ENCODE measurements at regions of chr16 and their contacts with region 1.

Region 1: DNA sequence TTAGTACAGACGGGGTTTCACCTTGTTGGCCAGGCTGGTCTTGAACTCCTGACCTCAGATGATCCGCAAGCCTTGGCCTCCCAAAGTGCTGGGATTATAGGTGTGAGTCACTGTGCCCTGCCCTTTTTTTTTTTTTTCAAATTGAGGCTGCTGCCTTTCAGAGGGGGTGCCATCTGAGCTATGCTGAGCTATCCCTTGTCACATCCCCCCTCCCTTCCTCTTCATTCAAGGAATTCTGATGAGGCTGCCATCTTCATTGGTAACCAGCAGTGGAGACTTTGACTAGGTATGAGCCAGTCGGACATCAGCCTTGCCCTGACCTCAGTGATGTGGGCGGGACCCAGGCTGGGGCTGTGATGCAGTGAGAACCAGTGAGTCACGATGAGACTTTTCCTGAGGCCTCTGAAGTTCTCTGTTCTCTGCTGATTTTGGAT is 24.4 kb upstream of the GPT2 start:
- DNase-seq: no peak
- ATAC-seq: peak; percentile 12; the same call in 1 of the 3 replicates
- H3K4me3 ChIP-seq: no peak overlapping the region
- H3K27ac ChIP-seq: no peak overlapping the region
- H3K4me1 ChIP-seq: peaks cover 13% of the 10 kb centered on the region
- H3K27me3 ChIP-seq: no peaks in the 10 kb centered on the region
- CTCF ChIP-seq: no peak
- EP300 ChIP-seq: no peak
- POLR2A ChIP-seq: no peak
- RAD21 ChIP-seq: no peak

Region 2: GRCh38 chr16:46883690-46884512 is 24.2 kb after region 1 on chr16 and contains the start of gene GPT2:
- CTCF ChIA-PET with region 1: interaction called, 10 read pairs
- POLR2A ChIA-PET with region 1: interaction called, 3 read pairs
- RAD21 ChIA-PET with region 1: interaction called, 5 read pairs
- SMC1A ChIA-PET with region 1: interaction called, 9 read pairs
- in situ Hi-C with region 1: no loop called
- intact Hi-C with region 1: loop called (anchors 2 kb)
- DNase-seq: peak; percentile 69
- ATAC-seq: peak; percentile 99
- H3K4me3 ChIP-seq: peak within 1 kb of the TSS; percentile 93
- H3K27ac ChIP-seq: peak within 1 kb of the TSS; percentile 8; the same call in 1 of the 2 replicates
- H3K4me1 ChIP-seq: peaks cover 7% of the 10 kb centered on the region; the same call in 1 of the 2 replicates
- H3K27me3 ChIP-seq: 0 out of 4 replicates have a peak, but pooled peaks cover 0 to 2% of the 10 kb centered on the region in 2 experiments
- CTCF ChIP-seq: no peak
- EP300 ChIP-seq: no peak
- POLR2A ChIP-seq: peak; percentile 82
- RAD21 ChIP-seq: no peak
- polyA plus RNA-seq, gene GPT2: 0.45 to 0.80 TPM